GM12878 (cell line): ENCODE measurements at regions of chr7 and their contacts with region 1.

Region 1: DNA sequence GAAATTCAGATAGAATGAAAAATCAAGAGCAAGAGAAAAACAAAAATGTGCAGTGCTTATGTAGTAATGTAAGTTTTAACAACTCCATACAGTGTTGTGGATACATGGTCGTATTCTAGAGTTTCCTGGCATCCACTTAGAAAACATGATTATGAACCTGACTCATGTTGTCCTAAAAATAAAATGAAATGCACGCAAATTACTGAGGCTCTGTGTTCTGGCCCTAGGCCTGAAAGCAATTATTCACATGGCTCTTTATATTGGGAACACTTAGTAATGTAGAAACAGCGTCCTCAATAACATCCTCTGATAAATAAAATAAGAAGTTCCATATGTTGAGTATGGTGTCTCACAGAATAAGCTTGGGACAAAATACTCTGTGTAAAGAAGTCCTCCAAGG is 200.2 kb upstream of the SEMA3E start:
- DNase-seq: no peak
- ATAC-seq: no peak
- H3K4me3 ChIP-seq: no peak overlapping the region
- H3K27ac ChIP-seq: no peak overlapping the region
- H3K4me1 ChIP-seq: no peaks in the 10 kb centered on the region
- H3K27me3 ChIP-seq: no peaks in the 10 kb centered on the region
- CTCF ChIP-seq: no peak
- EP300 ChIP-seq: no peak
- POLR2A ChIP-seq: no peak
- RAD21 ChIP-seq: no peak

Region 2: DNA sequence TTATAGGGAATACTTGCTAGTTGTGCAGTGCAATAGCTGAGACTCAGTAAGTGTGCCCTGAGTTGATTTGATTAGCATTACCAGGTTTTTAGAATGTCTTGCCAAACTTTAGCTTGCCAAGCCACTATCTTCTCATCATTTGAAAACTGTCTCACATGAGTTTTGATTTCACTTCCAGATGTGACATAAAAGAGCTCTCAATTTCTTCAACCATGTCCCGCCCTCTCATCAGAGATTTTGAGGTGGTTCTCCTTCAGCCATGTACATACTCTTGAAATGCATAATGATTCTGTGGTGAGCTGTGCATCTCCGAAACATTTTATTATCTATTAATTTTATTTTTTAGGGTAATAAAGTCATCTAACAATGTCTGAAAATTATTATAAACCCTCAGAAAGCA is 14.8 kb after region 1 on chr7:
- CTCF ChIA-PET with region 1: interaction called, 11 read pairs
- POLR2A ChIA-PET with region 1: no interaction called
- RAD21 ChIA-PET with region 1: no interaction called
- SMC1A ChIA-PET with region 1: interaction called, 6 read pairs
- in situ Hi-C with region 1: no loop called
- intact Hi-C with region 1: no loop called
- DNase-seq: no peak
- ATAC-seq: peak; percentile 64
- H3K4me3 ChIP-seq: no peak overlapping the region
- H3K27ac ChIP-seq: no peak overlapping the region
- H3K4me1 ChIP-seq: no peaks in the 10 kb centered on the region
- H3K27me3 ChIP-seq: no peaks in the 10 kb centered on the region
- CTCF ChIP-seq: no peak
- EP300 ChIP-seq: no peak
- POLR2A ChIP-seq: no peak
- RAD21 ChIP-seq: no peak

Region 3: GRCh38 chr7:83957333-83957732 is 108.2 kb after region 1 on chr7:
- CTCF ChIA-PET with region 1: no interaction called
- POLR2A ChIA-PET with region 1: no interaction called
- RAD21 ChIA-PET with region 1: no interaction called
- SMC1A ChIA-PET with region 1: no interaction called
- in situ Hi-C with region 1: no loop called
- intact Hi-C with region 1: no loop called
- DNase-seq: no peak
- ATAC-seq: no peak
- H3K4me3 ChIP-seq: no peak overlapping the region
- H3K27ac ChIP-seq: no peak overlapping the region
- H3K4me1 ChIP-seq: no peaks in the 10 kb centered on the region
- H3K27me3 ChIP-seq: no peaks in the 10 kb centered on the region
- CTCF ChIP-seq: no peak
- EP300 ChIP-seq: no peak
- POLR2A ChIP-seq: no peak
- RAD21 ChIP-seq: no peak

Region 4: GRCh38 chr7:84009051-84009450 is 159.9 kb after region 1 on chr7:
- CTCF ChIA-PET with region 1: no interaction called
- POLR2A ChIA-PET with region 1: no interaction called
- RAD21 ChIA-PET with region 1: no interaction called
- SMC1A ChIA-PET with region 1: no interaction called
- in situ Hi-C with region 1: no loop called
- intact Hi-C with region 1: no loop called
- DNase-seq: no peak
- ATAC-seq: no peak
- H3K4me3 ChIP-seq: no peak overlapping the region
- H3K27ac ChIP-seq: no peak overlapping the region
- H3K4me1 ChIP-seq: no peaks in the 10 kb centered on the region
- H3K27me3 ChIP-seq: no peaks in the 10 kb centered on the region
- CTCF ChIP-seq: no peak
- EP300 ChIP-seq: no peak
- POLR2A ChIP-seq: no peak
- RAD21 ChIP-seq: no peak

Region 5: GRCh38 chr7:84248267-84248666 is 399.1 kb after region 1 on chr7:
- CTCF ChIA-PET with region 1: no interaction called
- POLR2A ChIA-PET with region 1: no interaction called
- RAD21 ChIA-PET with region 1: no interaction called
- SMC1A ChIA-PET with region 1: no interaction called
- in situ Hi-C with region 1: no loop called
- intact Hi-C with region 1: no loop called
- DNase-seq: peak; percentile 36
- ATAC-seq: peak; percentile 95
- H3K4me3 ChIP-seq: no peak overlapping the region
- H3K27ac ChIP-seq: no peak overlapping the region
- H3K4me1 ChIP-seq: 0 out of 2 replicates have a peak, but pooled peaks cover 4% of the 10 kb centered on the region
- H3K27me3 ChIP-seq: no peaks in the 10 kb centered on the region
- CTCF ChIP-seq: no peak
- EP300 ChIP-seq: peak in 1 of 2 experiments; percentile 48; a peak in 1 of 4 replicates
- POLR2A ChIP-seq: no peak
- RAD21 ChIP-seq: no peak